CD4-positive, alpha-beta T cell (primary cell): ENCODE measurements at regions of chr5 and their contacts with region 1.

Region 1: GRCh38 chr5:65760504-65761275 is 38.7 kb downstream of the NLN start:
- DNase-seq: peak; percentile 31 to 85 (median 57)
- ATAC-seq: peak; percentile 100
- H3K4me3 ChIP-seq: no peak overlapping the region
- H3K4me3 Mint-ChIP-seq: no peak overlapping the region
- H3K27ac ChIP-seq: no peak overlapping the region
- H3K27ac Mint-ChIP-seq: no peak overlapping the region
- H3K4me1 ChIP-seq: peaks cover 12% of the 10 kb centered on the region
- H3K4me1 Mint-ChIP-seq: peaks cover 6% of the 10 kb centered on the region
- H3K27me3 ChIP-seq: no peaks in the 10 kb centered on the region
- H3K27me3 Mint-ChIP-seq: no peaks in the 10 kb centered on the region
- CTCF ChIP-seq: peak; percentile 81

Region 2: GRCh38 chr5:65037845-65038815 is 722.6 kb before region 1 on chr5:
- CTCF ChIA-PET with region 1: no interaction called
- POLR2A ChIA-PET with region 1: no interaction called
- intact Hi-C with region 1: no loop called
- DNase-seq: peak in 5 of 14 experiments; percentile 6 to 73 (median 54)
- ATAC-seq: no peak
- H3K4me3 ChIP-seq: no peak overlapping the region
- H3K4me3 Mint-ChIP-seq: peak overlapping the region; percentile 39
- H3K27ac ChIP-seq: no peak overlapping the region
- H3K27ac Mint-ChIP-seq: peak overlapping the region; percentile 83
- H3K4me1 ChIP-seq: peaks cover 30% of the 10 kb centered on the region
- H3K4me1 Mint-ChIP-seq: peaks cover 22% of the 10 kb centered on the region
- H3K27me3 ChIP-seq: no peaks in the 10 kb centered on the region
- H3K27me3 Mint-ChIP-seq: no peaks in the 10 kb centered on the region
- CTCF ChIP-seq: peak; percentile 14

Region 3: GRCh38 chr5:65674749-65675148 is 85.9 kb before region 1 on chr5:
- CTCF ChIA-PET with region 1: no interaction called
- POLR2A ChIA-PET with region 1: no interaction called
- intact Hi-C with region 1: no loop called
- DNase-seq: no peak
- ATAC-seq: no peak
- H3K4me3 ChIP-seq: no peak overlapping the region
- H3K4me3 Mint-ChIP-seq: no peak overlapping the region
- H3K27ac ChIP-seq: no peak overlapping the region
- H3K27ac Mint-ChIP-seq: peak overlapping the region; percentile 48
- H3K4me1 ChIP-seq: peaks cover 4% of the 10 kb centered on the region
- H3K4me1 Mint-ChIP-seq: peaks cover 42% of the 10 kb centered on the region
- H3K27me3 ChIP-seq: no peaks in the 10 kb centered on the region
- H3K27me3 Mint-ChIP-seq: no peaks in the 10 kb centered on the region
- CTCF ChIP-seq: no peak

Region 4: DNA sequence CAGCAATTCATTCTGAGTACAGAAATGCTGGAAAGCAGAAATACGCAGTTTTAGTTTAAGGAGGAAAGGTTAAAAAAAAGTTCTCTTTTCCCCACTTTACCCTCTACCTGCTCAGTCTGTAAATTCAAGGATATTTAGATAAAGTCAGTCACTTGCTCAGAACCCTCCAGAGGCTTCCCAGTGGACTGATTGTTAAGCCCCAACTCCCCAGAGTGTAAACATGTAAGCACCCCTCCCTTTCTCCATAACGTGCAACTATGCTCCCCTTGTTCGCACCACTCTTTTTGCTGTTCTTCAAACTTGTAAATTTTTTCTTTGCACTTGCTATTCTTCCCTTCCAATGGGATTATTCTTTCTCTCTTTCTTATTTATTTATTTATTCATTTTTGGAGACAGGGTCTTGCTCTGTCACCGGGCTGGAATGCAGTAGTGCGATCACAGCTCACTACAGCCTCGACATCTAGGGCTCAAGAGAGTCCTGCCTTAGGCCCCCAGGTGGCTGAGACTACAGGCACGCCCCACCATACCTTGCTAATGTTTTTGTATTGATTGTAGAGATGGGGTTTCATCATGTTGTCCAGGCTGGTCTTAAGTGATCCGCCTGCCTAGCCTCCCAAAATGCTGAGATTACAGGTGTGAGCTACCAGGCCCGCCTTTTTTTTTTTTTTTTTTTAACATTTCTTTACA is 133.2 kb after region 1 on chr5:
- CTCF ChIA-PET with region 1: no interaction called
- POLR2A ChIA-PET with region 1: no interaction called
- intact Hi-C with region 1: no loop called
- DNase-seq: no peak
- ATAC-seq: no peak
- H3K4me3 ChIP-seq: no peak overlapping the region
- H3K4me3 Mint-ChIP-seq: no peak overlapping the region
- H3K27ac ChIP-seq: no peak overlapping the region
- H3K27ac Mint-ChIP-seq: no peak overlapping the region
- H3K4me1 ChIP-seq: no peaks in the 10 kb centered on the region
- H3K4me1 Mint-ChIP-seq: peaks cover 5% of the 10 kb centered on the region
- H3K27me3 ChIP-seq: no peaks in the 10 kb centered on the region
- H3K27me3 Mint-ChIP-seq: no peaks in the 10 kb centered on the region
- CTCF ChIP-seq: no peak

Region 5: GRCh38 chr5:66010476-66010875 is 249.8 kb after region 1 on chr5:
- CTCF ChIA-PET with region 1: interaction called, 3 read pairs
- POLR2A ChIA-PET with region 1: no interaction called
- intact Hi-C with region 1: loop called in 1 of 2 experiments (anchors 5 kb)
- DNase-seq: peak in 3 of 14 experiments; percentile 18 to 49 (median 28)
- ATAC-seq: peak; percentile 93
- H3K4me3 ChIP-seq: no peak overlapping the region
- H3K4me3 Mint-ChIP-seq: peak overlapping the region; percentile 7
- H3K27ac ChIP-seq: no peak overlapping the region
- H3K27ac Mint-ChIP-seq: peak overlapping the region; percentile 90
- H3K4me1 ChIP-seq: peaks cover 2% of the 10 kb centered on the region
- H3K4me1 Mint-ChIP-seq: peaks cover 55% of the 10 kb centered on the region
- H3K27me3 ChIP-seq: no peaks in the 10 kb centered on the region
- H3K27me3 Mint-ChIP-seq: no peaks in the 10 kb centered on the region
- CTCF ChIP-seq: no peak

Region 6: GRCh38 chr5:66039296-66039695 is 278.6 kb after region 1 on chr5:
- CTCF ChIA-PET with region 1: no interaction called
- POLR2A ChIA-PET with region 1: no interaction called
- intact Hi-C with region 1: loop called in 1 of 2 experiments (anchors 5 kb)
- DNase-seq: no peak
- ATAC-seq: no peak
- H3K4me3 ChIP-seq: no peak overlapping the region
- H3K4me3 Mint-ChIP-seq: no peak overlapping the region
- H3K27ac ChIP-seq: no peak overlapping the region
- H3K27ac Mint-ChIP-seq: no peak overlapping the region
- H3K4me1 ChIP-seq: no peaks in the 10 kb centered on the region
- H3K4me1 Mint-ChIP-seq: peaks cover 55% of the 10 kb centered on the region
- H3K27me3 ChIP-seq: no peaks in the 10 kb centered on the region
- H3K27me3 Mint-ChIP-seq: no peaks in the 10 kb centered on the region
- CTCF ChIP-seq: no peak

Region 7: GRCh38 chr5:66171349-66172344 is 411.0 kb after region 1 on chr5:
- CTCF ChIA-PET with region 1: no interaction called
- POLR2A ChIA-PET with region 1: interaction called, 3 read pairs
- intact Hi-C with region 1: loop called (anchors 2 to 5 kb)
- DNase-seq: peak; percentile 20 to 89 (median 44)
- ATAC-seq: peak; percentile 68
- H3K4me3 ChIP-seq: no peak overlapping the region
- H3K4me3 Mint-ChIP-seq: peak overlapping the region; percentile 36
- H3K27ac ChIP-seq: peak overlapping the region in 1 of 2 donors; percentile 6
- H3K27ac Mint-ChIP-seq: peak overlapping the region; percentile 85
- H3K4me1 ChIP-seq: no peaks in the 10 kb centered on the region
- H3K4me1 Mint-ChIP-seq: peaks cover 41% of the 10 kb centered on the region
- H3K27me3 ChIP-seq: no peaks in the 10 kb centered on the region
- H3K27me3 Mint-ChIP-seq: no peaks in the 10 kb centered on the region
- CTCF ChIP-seq: peak; percentile 69

Region 8: GRCh38 chr5:66306105-66306843 is 545.6 kb after region 1 on chr5:
- CTCF ChIA-PET with region 1: no interaction called
- POLR2A ChIA-PET with region 1: no interaction called
- intact Hi-C with region 1: loop called (anchors 5 to 10 kb)
- DNase-seq: peak in 4 of 14 experiments; percentile 26 to 58 (median 48)
- ATAC-seq: peak; percentile 65
- H3K4me3 ChIP-seq: no peak overlapping the region
- H3K4me3 Mint-ChIP-seq: no peak overlapping the region
- H3K27ac ChIP-seq: no peak overlapping the region
- H3K27ac Mint-ChIP-seq: no peak overlapping the region
- H3K4me1 ChIP-seq: peaks cover 5% of the 10 kb centered on the region
- H3K4me1 Mint-ChIP-seq: peaks cover 10% of the 10 kb centered on the region
- H3K27me3 ChIP-seq: peaks cover 0 to 10% of the 10 kb centered on the region in 2 experiments
- H3K27me3 Mint-ChIP-seq: peaks cover 5% of the 10 kb centered on the region
- CTCF ChIP-seq: peak; percentile 77

Region 9: GRCh38 chr5:66757188-66757833 is 996.6 kb after region 1 on chr5:
- CTCF ChIA-PET with region 1: no interaction called
- POLR2A ChIA-PET with region 1: interaction called, 3 read pairs
- intact Hi-C with region 1: loop called (anchors 1 to 2 kb)
- DNase-seq: peak in 5 of 14 experiments; percentile 6 to 45 (median 33)
- ATAC-seq: no peak
- H3K4me3 ChIP-seq: no peak overlapping the region
- H3K4me3 Mint-ChIP-seq: no peak overlapping the region
- H3K27ac ChIP-seq: no peak overlapping the region
- H3K27ac Mint-ChIP-seq: no peak overlapping the region
- H3K4me1 ChIP-seq: no peaks in the 10 kb centered on the region
- H3K4me1 Mint-ChIP-seq: no peaks in the 10 kb centered on the region
- H3K27me3 ChIP-seq: no peaks in the 10 kb centered on the region
- H3K27me3 Mint-ChIP-seq: peaks cover 17% of the 10 kb centered on the region
- CTCF ChIP-seq: peak; percentile 25